Mammary epithelial cell (primary cell): ENCODE measurements at regions of chr14 and their contacts with region 1.

Region 1: GRCh38 chr14:78524766-78525165 is 354.6 kb downstream of the NRXN3 start:
- DNase-seq: no peak
- H3K4me3 ChIP-seq: no peak overlapping the region
- H3K27ac ChIP-seq: no peak overlapping the region
- H3K4me1 ChIP-seq: no peaks in the 10 kb centered on the region
- H3K27me3 ChIP-seq: no peaks in the 10 kb centered on the region
- CTCF ChIP-seq: no peak

Region 2: GRCh38 chr14:78432046-78432445 is 92.7 kb before region 1 on chr14:
- CTCF ChIA-PET with region 1: no interaction called
- dilution Hi-C with region 1: loop called (anchors 5 kb)
- in situ Hi-C with region 1: no loop called
- intact Hi-C with region 1: no loop called
- DNase-seq: no peak
- H3K4me3 ChIP-seq: no peak overlapping the region
- H3K27ac ChIP-seq: no peak overlapping the region
- H3K4me1 ChIP-seq: no peaks in the 10 kb centered on the region
- H3K27me3 ChIP-seq: no peaks in the 10 kb centered on the region
- CTCF ChIP-seq: no peak